ENCODE measurements at regions of chr1 and their contacts with region 1.

Region 1: GRCh38 chr1:5770981-5771765 is 221.1 kb downstream of the NPHP4 start:
- DNase-seq: no peak
- H3K4me3 ChIP-seq: no peak overlapping the region
- H3K27ac ChIP-seq: no peak overlapping the region
- H3K4me1 ChIP-seq: peaks cover 0 to 3% (median 0%) of the 10 kb centered on the region in 4 donors
- H3K27me3 ChIP-seq: peaks cover 32% of the 10 kb centered on the region
- CTCF ChIP-seq: no peak
- EP300 ChIP-seq: no peak
- POLR2A ChIP-seq: no peak

Region 2: DNA sequence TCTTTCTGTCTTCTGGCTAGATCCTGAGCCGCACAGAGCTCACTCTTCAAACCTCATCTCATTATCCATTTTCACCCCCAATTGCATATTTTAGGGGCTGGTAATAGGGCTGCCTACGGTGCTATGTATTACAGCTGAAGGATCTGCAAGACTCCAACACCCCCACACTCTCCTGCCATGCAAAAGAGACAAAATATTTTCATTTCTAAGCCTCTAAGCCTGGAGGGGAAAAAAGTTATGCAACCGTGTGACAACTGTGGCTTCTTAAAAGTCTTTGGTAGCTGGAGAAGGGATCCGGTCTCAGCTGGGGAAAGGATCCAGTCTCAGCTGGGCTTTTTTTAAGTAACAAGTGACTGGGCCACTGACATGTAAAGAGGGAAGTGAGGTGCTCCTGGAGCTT is 90.5 kb before region 1 on chr1:
- in situ Hi-C with region 1: no loop called
- intact Hi-C with region 1: no loop called
- DNase-seq: no peak
- H3K4me3 ChIP-seq: no peak overlapping the region
- H3K27ac ChIP-seq: no peak overlapping the region
- H3K4me1 ChIP-seq: no peaks in the 10 kb centered on the region
- H3K27me3 ChIP-seq: peaks cover 6% of the 10 kb centered on the region
- CTCF ChIP-seq: no peak
- EP300 ChIP-seq: no peak
- POLR2A ChIP-seq: no peak

Region 3: DNA sequence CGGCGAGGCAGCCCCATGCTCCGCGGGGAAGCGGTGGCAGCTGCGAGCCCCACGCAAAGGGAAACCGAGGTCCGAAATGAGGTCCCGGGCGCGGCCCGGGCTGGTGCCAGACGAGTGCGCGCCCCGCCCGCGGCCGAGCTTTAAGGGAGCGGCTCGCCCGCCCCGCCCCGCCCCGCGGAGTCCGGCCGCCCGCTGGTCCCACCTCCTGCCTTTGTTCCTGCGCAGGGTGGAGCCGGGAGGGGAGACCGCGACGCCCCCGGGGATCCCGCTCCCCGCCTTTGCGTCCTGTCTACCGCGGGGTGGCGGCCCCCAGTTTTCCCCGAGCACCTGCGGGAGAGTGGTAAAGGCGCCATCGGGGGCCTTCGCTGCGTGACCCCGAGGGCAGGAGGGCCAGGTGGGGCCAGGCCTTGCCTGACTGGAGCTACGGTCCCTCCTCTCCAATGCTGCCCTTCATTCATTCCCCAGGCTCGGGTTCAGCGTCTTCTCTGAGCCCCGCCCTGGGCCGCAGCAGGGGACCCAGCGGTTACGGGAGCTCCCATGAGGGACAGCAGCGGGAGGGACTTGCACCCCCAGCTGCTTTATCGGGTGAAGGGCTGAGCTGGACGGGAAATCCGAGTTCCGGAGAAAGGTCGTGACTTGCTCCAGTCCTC is 648.8 kb after region 1 on chr1 and contains the start of gene HES2:
- in situ Hi-C with region 1: no loop called
- intact Hi-C with region 1: loop called (anchors 5 kb)
- DNase-seq: peak; percentile 80
- H3K4me3 ChIP-seq: peak within 1 kb of the TSS; percentile 19 to 56 (median 41)
- H3K27ac ChIP-seq: peak within 1 kb of the TSS; percentile 63 to 84 (median 76)
- H3K4me1 ChIP-seq: peaks cover 17 to 58% (median 55%) of the 10 kb centered on the region in 4 donors
- H3K27me3 ChIP-seq: peaks cover 91% of the 10 kb centered on the region
- CTCF ChIP-seq: no peak
- EP300 ChIP-seq: no peak
- POLR2A ChIP-seq: peak; percentile 58
- total RNA-seq, gene HES2: 10.5 to 38.8 (median 25.4) TPM